Tibial artery (tissue), 4 donors: ENCODE measurements at regions of chr9 and their contacts with region 1.

Region 1: DNA sequence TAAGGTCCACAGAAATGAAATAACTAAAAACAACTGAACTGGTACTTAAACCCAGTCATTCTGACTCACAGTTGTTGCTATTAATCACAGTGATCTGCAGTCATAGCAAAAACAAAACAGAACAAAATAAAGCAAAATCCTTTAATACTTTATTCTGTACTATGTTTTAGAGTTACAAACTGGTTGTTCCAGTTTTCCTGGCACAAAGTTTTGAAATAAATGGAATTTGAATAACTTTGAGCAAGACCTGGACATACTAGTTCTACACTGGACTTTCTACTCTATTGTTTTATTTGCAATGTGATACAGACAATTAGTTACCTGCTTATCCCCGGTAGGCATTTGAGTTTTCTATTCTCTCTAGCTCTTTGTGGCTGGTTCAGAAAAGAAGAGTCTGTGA is 147.9 kb downstream of the DMRT2 start:
- DNase-seq: no peak
- H3K4me3 ChIP-seq: no peak overlapping the region
- H3K27ac ChIP-seq: no peak overlapping the region
- H3K4me1 ChIP-seq: no peaks in the 10 kb centered on the region
- H3K27me3 ChIP-seq: no peaks in the 10 kb centered on the region
- CTCF ChIP-seq: no peak

Region 2: GRCh38 chr9:214648-215493 is 983.2 kb before region 1 on chr9 and contains the start of gene DOCK8:
- intact Hi-C with region 1: no loop called
- DNase-seq: peak; percentile 58 to 73
- H3K4me3 ChIP-seq: peak within 1 kb of the TSS; percentile 49 to 53
- H3K27ac ChIP-seq: peak within 1 kb of the TSS; percentile 32 to 50
- H3K4me1 ChIP-seq: peaks cover 0 to 14% (median 9%) of the 10 kb centered on the region in 4 donors
- H3K27me3 ChIP-seq: peaks cover 0 to 25% of the 10 kb centered on the region in 2 donors
- CTCF ChIP-seq: no peak

Region 3: DNA sequence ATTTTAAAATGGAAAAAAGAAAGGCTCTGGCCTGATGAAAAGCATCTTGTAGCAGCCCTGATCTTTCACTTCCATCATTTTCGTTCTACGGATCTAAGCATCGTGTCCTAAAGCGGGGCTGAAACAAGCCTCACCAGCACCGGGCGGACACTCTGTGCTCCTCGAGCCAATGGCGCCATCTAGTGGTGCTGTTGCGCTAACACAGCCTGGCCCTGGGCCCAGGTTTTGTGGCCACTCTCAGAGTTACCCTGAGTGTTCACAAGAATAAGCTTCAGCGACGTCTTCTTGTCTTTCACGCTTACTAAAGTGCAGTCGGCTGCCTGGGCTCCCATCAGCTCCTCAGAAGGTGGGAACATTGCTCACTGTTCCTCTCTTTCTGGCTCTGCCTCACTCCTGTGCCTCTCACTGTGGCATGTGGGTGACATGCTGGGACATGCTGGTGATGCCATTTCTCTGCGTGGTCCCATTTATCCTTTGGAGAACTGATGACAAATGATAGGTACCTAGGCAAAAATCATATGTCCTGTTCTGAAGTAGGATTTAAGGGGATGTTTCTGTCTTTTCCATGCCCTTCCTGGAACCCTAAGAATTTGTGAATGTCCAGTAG is 188.9 kb before region 1 on chr9:
- intact Hi-C with region 1: no loop called
- DNase-seq: peak; percentile 66 to 84
- H3K4me3 ChIP-seq: no peak overlapping the region
- H3K27ac ChIP-seq: no peak overlapping the region
- H3K4me1 ChIP-seq: peaks cover 0 to 5% (median 0%) of the 10 kb centered on the region in 4 donors
- H3K27me3 ChIP-seq: peaks cover 0 to 21% of the 10 kb centered on the region in 2 donors
- CTCF ChIP-seq: peak; percentile 78 to 87

Region 4: GRCh38 chr9:1219284-1219683 is 21.2 kb after region 1 on chr9:
- intact Hi-C with region 1: loop called (anchors 1 kb)
- DNase-seq: no peak
- H3K4me3 ChIP-seq: no peak overlapping the region
- H3K27ac ChIP-seq: no peak overlapping the region
- H3K4me1 ChIP-seq: no peaks in the 10 kb centered on the region
- H3K27me3 ChIP-seq: no peaks in the 10 kb centered on the region
- CTCF ChIP-seq: no peak

Region 5: GRCh38 chr9:1637401-1637800 is 439.3 kb after region 1 on chr9:
- intact Hi-C with region 1: no loop called
- DNase-seq: no peak
- H3K4me3 ChIP-seq: no peak overlapping the region
- H3K27ac ChIP-seq: no peak overlapping the region
- H3K4me1 ChIP-seq: no peaks in the 10 kb centered on the region
- H3K27me3 ChIP-seq: no peaks in the 10 kb centered on the region
- CTCF ChIP-seq: no peak